Mammary epithelial cell (primary cell): ENCODE measurements at regions of chr3 and their contacts with region 1.

Region 1: DNA sequence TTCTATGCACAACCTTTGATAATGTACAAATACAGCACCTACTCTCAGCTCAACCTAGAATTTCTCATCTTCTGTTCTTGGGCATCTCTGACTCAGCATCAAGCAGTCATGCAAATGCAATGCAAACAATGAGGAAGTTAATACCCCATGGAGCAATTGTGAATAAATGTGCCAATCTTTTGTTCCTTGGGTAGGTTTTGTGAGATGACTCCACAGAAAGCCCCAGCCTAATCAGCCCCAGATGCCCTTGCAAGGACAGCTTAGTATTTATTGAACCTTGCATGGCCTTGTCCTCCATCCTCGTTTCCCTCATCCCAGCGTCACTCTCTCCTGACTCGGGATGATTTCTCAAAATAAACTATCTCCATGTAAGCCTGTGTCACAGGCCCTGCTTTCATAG is 494.7 kb upstream of the NECTIN3 start:
- DNase-seq: peak; percentile 77
- H3K4me3 ChIP-seq: no peak overlapping the region
- H3K27ac ChIP-seq: peak overlapping the region; percentile 11
- H3K4me1 ChIP-seq: peaks cover 8% of the 10 kb centered on the region
- H3K27me3 ChIP-seq: no peaks in the 10 kb centered on the region
- CTCF ChIP-seq: no peak

Region 2: DNA sequence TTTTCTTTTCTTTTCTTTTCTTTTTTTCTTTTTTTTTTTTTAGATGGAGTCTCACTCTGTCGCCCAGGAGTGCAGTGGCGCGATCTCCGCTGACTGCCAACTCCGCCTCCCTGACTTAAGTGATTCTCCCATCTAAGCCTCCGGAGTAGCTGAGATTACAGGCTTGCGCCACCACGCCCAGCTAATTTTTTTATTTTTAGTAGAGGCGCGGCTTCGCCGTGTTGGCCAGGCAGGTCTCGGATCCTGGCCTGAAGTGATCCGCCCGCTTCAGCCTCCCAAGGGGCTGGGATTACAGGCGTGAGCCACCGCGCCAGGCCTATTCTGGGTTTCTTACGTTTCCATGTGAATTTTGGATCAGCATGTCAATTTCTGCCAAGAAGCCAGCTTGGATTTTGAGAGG is 291.9 kb before region 1 on chr3:
- CTCF ChIA-PET with region 1: no interaction called
- dilution Hi-C with region 1: no loop called
- in situ Hi-C with region 1: no loop called
- intact Hi-C with region 1: no loop called
- DNase-seq: no peak
- H3K4me3 ChIP-seq: no peak overlapping the region
- H3K27ac ChIP-seq: no peak overlapping the region
- H3K4me1 ChIP-seq: no peaks in the 10 kb centered on the region
- H3K27me3 ChIP-seq: no peaks in the 10 kb centered on the region
- CTCF ChIP-seq: no peak

Region 3: DNA sequence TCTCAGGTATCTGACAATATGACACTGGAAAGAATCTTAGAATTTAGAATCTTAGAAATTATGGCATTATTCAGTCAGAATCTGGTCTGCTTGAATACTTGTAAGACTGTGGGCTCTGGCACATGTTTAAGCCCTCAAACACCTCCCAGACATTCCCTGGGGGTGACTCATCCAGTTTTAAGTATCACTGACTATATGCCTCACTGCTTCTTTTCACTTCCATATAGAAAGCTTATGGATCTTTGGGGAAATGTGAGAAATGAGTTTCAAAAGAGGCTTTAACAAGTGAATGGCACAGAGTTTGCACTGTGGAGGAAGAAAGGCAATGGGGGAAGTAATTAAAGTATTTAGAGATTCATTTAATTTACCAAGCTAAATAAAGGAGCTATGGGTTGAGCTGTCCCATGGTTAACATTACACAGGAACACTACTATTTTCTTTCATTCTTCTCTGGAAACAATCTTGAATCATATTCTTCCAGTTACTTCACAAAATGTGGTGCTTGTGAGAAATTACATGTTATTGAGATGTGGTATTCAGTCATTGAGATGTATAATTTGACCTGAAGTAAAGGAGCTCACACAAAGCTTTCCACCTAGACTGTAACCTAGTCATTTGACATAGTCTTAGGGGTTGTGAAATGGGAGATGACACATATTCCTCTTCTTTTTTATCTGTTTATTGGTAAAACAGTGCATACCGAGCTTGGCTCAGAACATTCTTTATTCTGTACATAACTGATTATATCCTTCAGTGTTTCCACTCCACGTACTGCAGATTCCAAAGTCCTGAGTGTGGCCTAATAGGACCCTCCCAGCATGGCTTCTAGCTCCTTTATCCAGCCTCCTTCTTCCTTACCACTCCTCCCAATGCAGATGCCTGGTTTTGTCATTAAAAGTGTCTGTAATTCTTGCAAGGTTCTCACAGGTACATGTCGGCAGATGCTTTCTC is 49.9 kb before region 1 on chr3:
- CTCF ChIA-PET with region 1: no interaction called
- dilution Hi-C with region 1: no loop called
- in situ Hi-C with region 1: no loop called
- intact Hi-C with region 1: loop called (anchors 5 kb)
- DNase-seq: peak; percentile 82
- H3K4me3 ChIP-seq: no peak overlapping the region
- H3K27ac ChIP-seq: peak overlapping the region; percentile 91
- H3K4me1 ChIP-seq: peaks cover 19% of the 10 kb centered on the region
- H3K27me3 ChIP-seq: no peaks in the 10 kb centered on the region
- CTCF ChIP-seq: no peak

Region 4: DNA sequence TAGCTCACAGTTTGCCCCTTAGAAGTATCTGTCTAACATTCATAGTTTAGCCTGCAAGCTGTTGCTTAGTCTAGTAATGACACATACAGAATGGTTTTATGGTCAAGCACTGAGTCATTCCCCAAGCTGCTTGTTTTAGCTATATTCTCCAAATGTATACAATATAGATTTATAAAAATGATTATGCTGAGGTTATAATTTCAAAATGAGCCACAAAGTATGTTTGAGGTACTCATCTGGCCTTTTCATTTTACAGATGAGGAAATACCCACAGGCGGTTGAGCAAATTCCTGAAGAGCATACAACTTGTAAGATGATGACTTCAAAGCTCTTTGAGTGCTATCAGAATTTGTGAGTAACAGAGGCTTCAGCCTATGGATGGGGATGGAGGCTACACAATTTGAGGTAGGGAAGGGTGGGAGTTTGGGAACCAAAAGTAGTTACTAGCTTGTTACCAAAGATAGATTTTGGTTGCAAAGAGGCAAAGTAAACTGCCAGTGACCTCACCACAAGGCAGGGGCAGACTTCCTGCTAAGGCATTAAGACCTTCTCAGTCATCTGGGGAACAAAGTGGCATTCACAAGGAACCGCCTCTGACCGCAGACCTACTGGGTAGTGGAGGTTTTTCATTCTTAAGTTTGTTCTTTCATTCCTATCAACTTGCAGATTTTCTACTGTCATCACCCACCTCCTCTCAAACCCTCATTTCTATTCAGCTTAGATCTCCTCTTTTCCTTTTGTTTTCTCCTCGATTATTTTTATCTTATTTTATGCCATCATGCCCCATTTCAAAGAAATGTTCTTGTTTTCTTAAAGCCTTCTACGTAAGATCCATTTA is 237.4 kb after region 1 on chr3:
- CTCF ChIA-PET with region 1: no interaction called
- dilution Hi-C with region 1: no loop called
- in situ Hi-C with region 1: no loop called
- intact Hi-C with region 1: loop called (anchors 10 kb)
- DNase-seq: peak; percentile 87
- H3K4me3 ChIP-seq: no peak overlapping the region
- H3K27ac ChIP-seq: peak overlapping the region; percentile 72
- H3K4me1 ChIP-seq: peaks cover 24% of the 10 kb centered on the region
- H3K27me3 ChIP-seq: no peaks in the 10 kb centered on the region
- CTCF ChIP-seq: no peak